ENCODE measurements at regions of chr12 and their contacts with region 1.

Region 1: DNA sequence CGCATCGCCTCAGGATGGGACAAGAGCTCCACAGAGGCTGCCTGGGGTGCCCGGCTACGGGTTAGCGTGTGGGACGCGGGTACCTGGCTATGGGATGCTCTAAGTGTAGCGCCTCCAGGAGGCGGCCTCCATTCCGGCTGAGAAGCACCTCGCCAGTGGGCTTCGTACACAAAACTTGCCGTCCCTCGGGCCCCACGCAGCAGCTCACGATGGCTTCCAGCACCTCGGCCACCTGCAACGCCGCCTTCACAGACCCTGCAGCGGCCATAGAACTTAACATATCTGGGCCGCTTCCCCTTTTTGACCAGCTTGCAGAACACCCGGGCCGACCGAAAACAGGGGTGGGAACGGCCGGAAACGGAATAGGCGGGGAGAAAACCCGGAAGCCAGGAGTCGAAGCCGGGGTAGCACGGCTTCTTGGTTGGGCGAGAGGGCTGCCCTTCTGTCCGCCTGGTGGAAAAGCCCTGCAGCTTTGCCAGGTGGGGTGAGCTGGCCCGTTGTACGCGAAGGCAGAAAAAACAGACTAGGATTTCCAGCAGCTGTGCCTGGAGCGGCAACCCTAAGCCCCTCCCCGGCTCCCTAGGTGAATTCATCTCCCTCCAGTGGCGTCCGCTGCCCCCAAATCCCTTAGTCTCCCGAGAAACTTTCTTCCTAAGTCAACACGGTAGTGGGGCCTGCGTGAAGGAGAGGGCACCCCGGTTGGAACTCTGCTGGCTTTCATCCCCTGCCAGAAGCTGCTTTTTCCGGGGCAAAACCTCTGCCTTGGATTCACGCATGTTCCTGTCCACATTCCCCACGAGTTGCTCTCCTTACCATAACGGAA is at the start of gene BBS10:
- DNase-seq: peak; percentile 92
- H3K4me3 Mint-ChIP-seq: peak within 1 kb of the TSS; percentile 90
- H3K27ac Mint-ChIP-seq: peak within 1 kb of the TSS; percentile 86
- H3K4me1 Mint-ChIP-seq: peaks cover 22% of the 10 kb centered on the region
- H3K27me3 Mint-ChIP-seq: no peaks in the 10 kb centered on the region
- total RNA-seq, gene BBS10: 3.3 TPM

Region 2: GRCh38 chr12:75390899-75391538 is 957.3 kb before region 1 on chr12 and contains the start of gene GLIPR1L2:
- CTCF ChIA-PET with region 1: no interaction called
- intact Hi-C with region 1: loop called (anchors 2 kb)
- DNase-seq: peak; percentile 93
- H3K4me3 Mint-ChIP-seq: peak within 1 kb of the TSS; percentile 87
- H3K27ac Mint-ChIP-seq: peak within 1 kb of the TSS; percentile 89
- H3K4me1 Mint-ChIP-seq: peaks cover 27% of the 10 kb centered on the region
- H3K27me3 Mint-ChIP-seq: no peaks in the 10 kb centered on the region
- total RNA-seq, gene GLIPR1L2: 0.33 to 0.35 TPM

Region 3: DNA sequence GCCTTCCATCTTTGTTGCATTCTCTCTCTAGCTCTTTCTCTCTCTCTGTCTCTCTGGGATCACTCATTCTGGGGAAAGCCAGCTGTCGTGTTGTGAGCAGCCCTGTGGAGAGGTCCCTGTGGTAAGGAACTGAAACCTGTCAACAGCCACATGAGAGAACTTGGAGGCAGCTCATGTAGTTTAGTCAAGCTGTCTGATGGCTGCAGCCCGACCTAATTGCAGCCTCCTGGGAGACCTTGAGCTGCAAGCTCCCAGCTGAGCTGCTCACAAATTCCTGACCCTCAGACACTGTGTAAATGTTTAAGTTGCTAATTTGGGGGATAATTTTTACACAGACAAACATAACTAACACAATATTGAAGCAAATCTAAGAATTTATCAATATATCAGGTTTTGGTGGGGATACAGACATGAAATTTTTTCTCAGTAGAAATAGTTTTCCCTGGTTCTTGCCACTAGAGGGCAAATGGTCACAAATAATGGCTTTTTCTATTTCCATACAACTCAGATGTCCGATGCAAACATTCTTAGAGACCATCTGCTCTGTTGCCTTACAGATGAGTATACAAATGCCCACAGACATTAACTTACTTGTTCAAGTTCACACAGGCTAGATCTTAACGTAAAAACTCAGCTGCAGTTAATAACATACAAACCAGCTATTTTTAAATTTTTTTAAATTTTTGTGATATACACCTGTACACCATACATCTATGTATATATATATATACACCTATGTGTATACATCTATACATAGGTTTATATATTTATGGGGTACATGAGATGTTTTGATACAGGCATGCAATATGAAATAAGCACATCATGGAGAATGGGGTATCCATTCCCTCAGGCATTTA is 821.4 kb before region 1 on chr12:
- CTCF ChIA-PET with region 1: interaction called, 3 read pairs
- intact Hi-C with region 1: loop called (anchors 5 kb)
- DNase-seq: no peak
- H3K4me3 Mint-ChIP-seq: no peak overlapping the region
- H3K27ac Mint-ChIP-seq: no peak overlapping the region
- H3K4me1 Mint-ChIP-seq: peaks cover 3% of the 10 kb centered on the region
- H3K27me3 Mint-ChIP-seq: peaks cover 27% of the 10 kb centered on the region

Region 4: GRCh38 chr12:75814851-75815754 is 533.2 kb before region 1 on chr12:
- CTCF ChIA-PET with region 1: no interaction called
- intact Hi-C with region 1: loop called (anchors 1 kb)
- DNase-seq: no peak
- H3K4me3 Mint-ChIP-seq: no peak overlapping the region
- H3K27ac Mint-ChIP-seq: no peak overlapping the region
- H3K4me1 Mint-ChIP-seq: no peaks in the 10 kb centered on the region
- H3K27me3 Mint-ChIP-seq: no peaks in the 10 kb centered on the region

Region 5: GRCh38 chr12:76259660-76260389 is 88.5 kb before region 1 on chr12:
- CTCF ChIA-PET with region 1: no interaction called
- intact Hi-C with region 1: no loop called
- DNase-seq: no peak
- H3K4me3 Mint-ChIP-seq: no peak overlapping the region
- H3K27ac Mint-ChIP-seq: no peak overlapping the region
- H3K4me1 Mint-ChIP-seq: peaks cover 5% of the 10 kb centered on the region
- H3K27me3 Mint-ChIP-seq: peaks cover 8% of the 10 kb centered on the region

Region 6: DNA sequence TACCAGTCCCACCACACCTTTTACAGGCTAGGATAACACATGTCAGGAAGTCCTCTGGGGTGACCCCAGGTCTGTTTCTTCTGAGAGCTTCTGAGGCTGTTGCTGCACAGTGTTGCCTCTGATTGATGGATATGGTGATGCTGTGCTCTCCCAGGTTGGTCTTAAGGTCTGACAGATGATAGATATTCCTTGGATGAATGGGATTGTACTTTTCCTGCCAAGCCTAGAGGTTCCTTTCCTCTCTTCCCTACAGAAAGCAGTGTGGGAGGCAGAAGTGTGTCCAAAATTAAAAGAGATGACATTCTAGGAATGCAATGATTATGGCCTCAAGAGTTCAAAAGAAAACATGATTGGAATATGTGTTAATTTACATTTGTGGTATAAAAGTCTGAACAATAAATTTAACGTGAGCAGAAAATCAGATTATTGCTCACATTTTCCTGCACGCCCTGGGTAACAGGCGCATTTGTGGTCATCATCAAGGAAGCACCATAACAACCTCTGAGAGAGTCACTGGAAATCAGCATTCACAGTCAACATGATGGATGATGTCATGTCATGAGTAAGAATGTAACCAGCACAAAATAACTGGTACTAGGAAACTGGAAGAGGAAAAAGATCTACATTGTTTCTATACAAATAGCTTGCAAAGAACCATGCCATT is 73.7 kb before region 1 on chr12:
- CTCF ChIA-PET with region 1: no interaction called
- intact Hi-C with region 1: loop called (anchors 1 kb)
- DNase-seq: peak; percentile 58
- H3K4me3 Mint-ChIP-seq: no peak overlapping the region
- H3K27ac Mint-ChIP-seq: peak overlapping the region; percentile 10
- H3K4me1 Mint-ChIP-seq: peaks cover 12% of the 10 kb centered on the region
- H3K27me3 Mint-ChIP-seq: peaks cover 11% of the 10 kb centered on the region

Region 7: GRCh38 chr12:76763743-76764675 is 415.7 kb after region 1 on chr12 and contains the start of gene ZDHHC17:
- CTCF ChIA-PET with region 1: no interaction called
- intact Hi-C with region 1: loop called (anchors 1 kb)
- DNase-seq: peak; percentile 88
- H3K4me3 Mint-ChIP-seq: peak within 1 kb of the TSS; percentile 98
- H3K27ac Mint-ChIP-seq: peak within 1 kb of the TSS; percentile 91
- H3K4me1 Mint-ChIP-seq: peaks cover 38% of the 10 kb centered on the region
- H3K27me3 Mint-ChIP-seq: no peaks in the 10 kb centered on the region
- total RNA-seq, gene ZDHHC17: 19.1 to 22.2 TPM